Caco-2 (cell line): ENCODE measurements at regions of chr1 and their contacts with region 1.

Region 1: DNA sequence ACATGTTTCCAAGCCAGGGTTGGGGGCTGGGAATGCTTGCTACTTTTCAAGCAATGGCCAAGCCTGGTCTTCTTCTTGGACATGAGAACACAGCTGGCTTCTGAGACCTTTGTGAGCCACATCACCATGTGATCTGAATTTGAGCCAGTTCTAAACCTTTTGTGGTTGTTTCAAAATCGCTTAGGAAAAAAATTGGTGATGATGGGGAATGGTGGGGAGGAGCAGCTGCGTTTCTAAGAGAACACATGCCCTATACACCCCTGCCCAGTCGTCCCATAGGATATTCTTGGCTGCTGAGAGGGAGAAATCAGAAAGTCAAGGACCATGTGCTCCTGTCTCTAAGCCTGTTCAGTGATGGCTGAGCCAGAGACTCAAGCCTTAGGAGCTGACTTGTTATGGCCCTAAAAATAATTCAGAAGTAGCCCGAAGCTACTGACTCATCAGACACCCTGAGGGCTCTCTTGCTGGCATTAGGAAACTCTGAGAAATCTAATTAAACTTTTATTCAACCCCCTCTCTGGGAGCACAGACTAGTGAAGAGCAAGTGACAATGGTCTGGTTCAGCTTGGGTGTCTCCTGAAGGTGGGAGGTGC is 30.5 kb downstream of the CCDC185 start:
- DNase-seq: no peak
- H3K4me3 ChIP-seq: no peak overlapping the region
- H3K4me3 Mint-ChIP-seq: no peak overlapping the region
- H3K27ac Mint-ChIP-seq: peak overlapping the region; percentile 77
- H3K4me1 ChIP-seq: peaks cover 44% of the 10 kb centered on the region
- H3K4me1 Mint-ChIP-seq: peaks cover 41% of the 10 kb centered on the region
- H3K27me3 ChIP-seq: no peaks in the 10 kb centered on the region
- H3K27me3 Mint-ChIP-seq: no peaks in the 10 kb centered on the region
- CTCF ChIP-seq: no peak

Region 2: DNA sequence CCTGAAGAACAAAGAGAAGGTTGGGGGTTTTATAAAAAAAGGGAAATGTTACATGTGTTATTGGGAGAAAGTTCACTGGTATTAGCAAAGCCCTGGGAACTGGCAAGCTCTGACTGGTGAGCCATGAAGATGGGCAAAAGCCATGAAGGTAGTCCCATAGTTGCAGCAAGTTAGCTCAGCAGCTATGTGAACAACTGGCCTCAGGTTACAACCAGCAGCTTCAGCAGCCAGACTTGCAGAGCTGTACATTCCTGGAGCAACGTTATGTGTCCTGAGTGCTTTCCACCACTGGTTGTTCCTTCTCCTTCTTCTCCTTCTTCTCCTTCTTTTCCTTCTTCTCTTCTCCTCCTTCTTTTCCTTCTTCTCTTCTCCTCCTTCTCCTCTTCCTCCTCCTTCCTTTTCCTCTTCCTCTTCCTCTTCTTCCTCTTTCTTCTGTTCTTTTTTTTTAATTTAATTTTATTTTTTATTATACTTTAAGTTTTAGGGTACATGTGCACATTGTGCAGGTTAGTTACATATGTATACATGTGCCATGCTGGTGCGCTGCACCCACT is 224.6 kb before region 1 on chr1:
- CTCF ChIA-PET with region 1: no interaction called
- POLR2A ChIA-PET with region 1: no interaction called
- intact Hi-C with region 1: loop called (anchors 2 kb)
- DNase-seq: no peak
- H3K4me3 ChIP-seq: no peak overlapping the region
- H3K4me3 Mint-ChIP-seq: no peak overlapping the region
- H3K27ac Mint-ChIP-seq: no peak overlapping the region
- H3K4me1 ChIP-seq: peaks cover 26% of the 10 kb centered on the region
- H3K4me1 Mint-ChIP-seq: peaks cover 57% of the 10 kb centered on the region
- H3K27me3 ChIP-seq: no peaks in the 10 kb centered on the region
- H3K27me3 Mint-ChIP-seq: no peaks in the 10 kb centered on the region
- CTCF ChIP-seq: no peak

Region 3: DNA sequence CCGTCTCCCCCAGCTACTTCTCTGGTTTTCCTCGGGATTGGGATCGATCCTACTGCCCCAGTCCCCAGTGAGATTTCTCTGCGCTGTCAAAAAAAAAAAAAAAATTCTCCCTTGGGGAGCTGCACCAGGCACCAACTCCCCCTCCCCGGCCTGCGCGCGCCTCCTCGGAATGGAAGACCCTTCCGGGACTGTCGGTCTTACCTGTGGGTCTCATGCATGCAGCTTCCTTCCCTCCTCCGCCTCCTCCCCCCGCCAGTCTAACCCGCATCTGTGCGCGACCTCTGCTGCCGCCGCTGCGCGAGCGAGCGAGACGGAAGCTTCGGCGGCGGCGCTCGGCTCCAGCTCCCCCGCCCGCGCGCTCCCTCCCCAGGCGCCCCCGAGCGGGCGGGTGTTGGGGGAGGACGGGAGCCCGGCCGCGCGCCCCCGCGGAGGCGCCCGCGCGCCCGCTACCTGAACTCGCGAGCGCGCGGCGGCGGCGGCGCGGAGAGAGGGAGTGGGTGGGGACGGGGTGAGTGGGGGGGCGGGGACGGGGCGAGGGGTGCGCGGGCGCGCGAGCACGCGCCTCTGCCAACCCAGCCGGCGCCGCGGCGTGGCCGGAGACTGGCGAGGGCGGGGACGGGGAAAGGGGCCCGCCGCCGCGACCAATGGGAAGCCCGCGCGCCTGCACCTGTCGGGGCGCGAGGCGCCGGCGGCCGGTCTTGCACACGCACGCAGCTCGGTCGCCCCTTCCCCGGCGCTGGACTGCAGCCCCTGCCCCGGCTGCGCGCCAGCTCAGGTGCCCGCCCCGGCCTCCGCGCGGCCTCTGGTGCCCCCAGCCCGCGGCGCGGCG is 59.7 kb before region 1 on chr1 and contains the start of gene SUSD4:
- CTCF ChIA-PET with region 1: no interaction called
- POLR2A ChIA-PET with region 1: interaction called, 3 read pairs
- intact Hi-C with region 1: loop called (anchors 2 kb)
- DNase-seq: peak; percentile 59 to 84
- H3K4me3 ChIP-seq: peak within 1 kb of the TSS; percentile 42
- H3K4me3 Mint-ChIP-seq: peak within 1 kb of the TSS; percentile 92
- H3K27ac Mint-ChIP-seq: peak within 1 kb of the TSS; percentile 11
- H3K4me1 ChIP-seq: no peaks in the 10 kb centered on the region; the same call in 1 of the 2 replicates
- H3K4me1 Mint-ChIP-seq: peaks cover 5% of the 10 kb centered on the region
- H3K27me3 ChIP-seq: no peaks in the 10 kb centered on the region; the same call in 1 of the 2 replicates
- H3K27me3 Mint-ChIP-seq: no peaks in the 10 kb centered on the region
- CTCF ChIP-seq: no peak
- total RNA-seq, gene SUSD4: 31.4 and 36.7 TPM in 2 replicates

Region 4: DNA sequence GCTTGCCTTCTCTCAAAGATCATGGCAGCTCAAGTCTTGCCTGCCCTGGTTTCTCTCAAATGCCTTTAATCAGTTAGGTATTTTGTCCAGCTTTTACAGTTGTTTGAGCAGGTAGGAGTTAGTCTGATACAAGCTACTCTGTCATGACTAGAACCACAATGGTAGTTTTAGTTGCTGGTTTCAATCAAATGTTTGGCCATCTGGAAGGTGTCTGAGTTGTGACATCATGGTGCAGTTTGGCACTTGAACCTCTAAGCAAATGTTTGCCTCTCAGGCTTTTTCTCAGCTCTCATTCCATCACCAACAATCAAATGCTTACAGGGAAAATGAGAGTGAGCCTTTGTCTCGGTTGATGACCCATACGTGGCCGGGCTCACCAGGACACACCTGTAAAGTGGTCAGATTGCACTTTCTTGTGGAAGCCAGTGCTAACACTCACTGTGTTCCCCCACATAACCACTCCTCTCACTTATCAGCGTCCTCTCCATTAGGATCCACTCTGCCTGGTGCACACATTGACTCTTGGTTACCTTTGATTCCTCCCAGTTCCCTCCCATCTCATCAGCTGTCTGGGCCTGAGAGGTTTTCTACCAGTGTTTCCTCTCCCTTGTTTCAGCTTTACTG is 36.9 kb after region 1 on chr1:
- CTCF ChIA-PET with region 1: no interaction called
- POLR2A ChIA-PET with region 1: no interaction called
- intact Hi-C with region 1: loop called (anchors 2 kb)
- DNase-seq: no peak
- H3K4me3 ChIP-seq: no peak overlapping the region
- H3K4me3 Mint-ChIP-seq: no peak overlapping the region
- H3K27ac Mint-ChIP-seq: no peak overlapping the region
- H3K4me1 ChIP-seq: peaks cover 30% of the 10 kb centered on the region
- H3K4me1 Mint-ChIP-seq: peaks cover 14% of the 10 kb centered on the region
- H3K27me3 ChIP-seq: no peaks in the 10 kb centered on the region; the same call in 1 of the 2 replicates
- H3K27me3 Mint-ChIP-seq: no peaks in the 10 kb centered on the region
- CTCF ChIP-seq: no peak

Region 5: DNA sequence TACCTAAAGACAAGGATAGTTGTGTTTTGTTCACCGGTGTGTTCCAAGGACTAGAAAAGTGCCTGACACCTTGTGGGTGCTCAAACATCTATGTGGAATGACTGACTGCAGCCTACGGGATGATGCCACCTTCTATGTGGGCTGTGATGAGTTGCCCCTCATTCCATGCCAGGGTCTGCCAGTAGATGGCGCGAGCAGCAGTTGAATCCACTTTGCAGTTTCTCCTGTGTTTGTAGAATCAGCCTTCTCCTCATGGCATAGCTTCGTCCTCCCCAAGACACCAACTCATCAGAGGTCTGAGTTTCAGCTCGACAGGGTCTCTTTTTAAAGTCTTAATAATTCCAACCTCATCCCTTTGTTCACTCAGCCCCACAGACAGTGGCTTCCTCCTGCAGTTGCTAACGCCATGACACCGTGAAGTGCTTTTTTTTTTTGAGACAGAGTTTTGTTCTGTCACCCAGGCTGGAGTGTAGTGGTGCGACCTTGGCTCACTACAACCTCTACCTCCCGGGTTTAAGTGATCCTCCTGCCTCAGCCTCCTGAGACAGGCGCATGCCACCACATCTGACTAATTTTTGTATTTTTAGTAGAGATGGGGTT is 108.1 kb after region 1 on chr1:
- CTCF ChIA-PET with region 1: no interaction called
- POLR2A ChIA-PET with region 1: no interaction called
- intact Hi-C with region 1: loop called (anchors 5 kb)
- DNase-seq: peak; percentile 62 to 66
- H3K4me3 ChIP-seq: no peak overlapping the region
- H3K4me3 Mint-ChIP-seq: no peak overlapping the region
- H3K27ac Mint-ChIP-seq: no peak overlapping the region
- H3K4me1 ChIP-seq: no peaks in the 10 kb centered on the region
- H3K4me1 Mint-ChIP-seq: no peaks in the 10 kb centered on the region
- H3K27me3 ChIP-seq: no peaks in the 10 kb centered on the region
- H3K27me3 Mint-ChIP-seq: no peaks in the 10 kb centered on the region
- CTCF ChIP-seq: peak; percentile 63 to 76